ENCODE measurements at regions of chr6 and their contacts with region 1.

Region 1: GRCh38 chr6:24933868-24934401 is 1.8 kb downstream of the RIPOR2 start:
- DNase-seq: peak; percentile 48
- ATAC-seq: peak; percentile 15
- H3K4me3 Mint-ChIP-seq: peak overlapping the region; percentile 99
- H3K27ac Mint-ChIP-seq: peak overlapping the region; percentile 94
- H3K4me1 Mint-ChIP-seq: peaks cover 75% of the 10 kb centered on the region
- H3K27me3 Mint-ChIP-seq: no peaks in the 10 kb centered on the region

Region 2: GRCh38 chr6:24831771-24832716 is 101.9 kb before region 1 on chr6:
- POLR2A ChIA-PET with region 1: no interaction called
- DNase-seq: no peak
- ATAC-seq: no peak
- H3K4me3 Mint-ChIP-seq: no peak overlapping the region
- H3K27ac Mint-ChIP-seq: no peak overlapping the region
- H3K4me1 Mint-ChIP-seq: peaks cover 14% of the 10 kb centered on the region
- H3K27me3 Mint-ChIP-seq: no peaks in the 10 kb centered on the region

Region 3: DNA sequence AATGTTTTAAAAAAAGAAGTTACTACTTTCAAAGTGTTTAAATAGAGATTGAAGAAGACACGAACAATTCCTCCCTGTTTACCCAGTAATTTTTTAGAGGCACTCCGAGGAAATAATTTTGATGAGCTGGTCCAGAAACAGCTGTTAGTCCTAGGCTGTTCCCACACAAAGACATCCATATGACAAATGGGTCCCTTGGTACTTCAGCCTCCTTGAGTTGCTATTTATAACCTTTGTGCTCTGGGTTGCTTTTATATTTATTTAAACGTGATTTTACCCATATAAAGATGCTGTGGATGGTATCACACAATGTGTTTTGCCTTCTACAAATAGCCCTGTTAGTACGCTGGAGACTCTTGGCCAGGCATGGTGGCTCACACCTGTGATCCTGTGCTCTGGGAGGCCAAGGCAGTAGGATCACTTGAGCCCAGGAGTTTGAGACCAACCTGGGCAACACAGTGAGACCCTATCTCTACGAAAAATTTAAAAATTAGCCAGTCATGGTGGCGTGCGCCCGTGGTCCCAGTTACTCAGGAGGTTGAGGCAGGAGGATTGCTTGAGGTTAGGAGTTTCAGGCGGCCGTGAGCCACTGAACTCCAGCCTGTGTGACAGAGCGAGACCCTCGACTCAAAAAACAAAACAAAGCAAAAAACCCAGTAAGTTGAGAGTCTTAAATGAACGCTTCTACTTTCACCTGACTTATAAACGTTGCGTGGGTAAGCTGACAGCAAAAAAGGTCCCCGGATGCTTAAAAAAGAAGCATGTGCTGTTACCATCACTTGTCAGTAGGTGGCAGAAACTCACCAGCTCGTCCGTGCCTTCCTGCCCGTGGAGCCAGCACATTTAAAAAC is 78.3 kb before region 1 on chr6:
- POLR2A ChIA-PET with region 1: interaction called, 16 read pairs
- DNase-seq: no peak
- ATAC-seq: peak; percentile 25
- H3K4me3 Mint-ChIP-seq: peak overlapping the region; percentile 37
- H3K27ac Mint-ChIP-seq: peak overlapping the region; percentile 84
- H3K4me1 Mint-ChIP-seq: peaks cover 48% of the 10 kb centered on the region
- H3K27me3 Mint-ChIP-seq: no peaks in the 10 kb centered on the region

Region 4: DNA sequence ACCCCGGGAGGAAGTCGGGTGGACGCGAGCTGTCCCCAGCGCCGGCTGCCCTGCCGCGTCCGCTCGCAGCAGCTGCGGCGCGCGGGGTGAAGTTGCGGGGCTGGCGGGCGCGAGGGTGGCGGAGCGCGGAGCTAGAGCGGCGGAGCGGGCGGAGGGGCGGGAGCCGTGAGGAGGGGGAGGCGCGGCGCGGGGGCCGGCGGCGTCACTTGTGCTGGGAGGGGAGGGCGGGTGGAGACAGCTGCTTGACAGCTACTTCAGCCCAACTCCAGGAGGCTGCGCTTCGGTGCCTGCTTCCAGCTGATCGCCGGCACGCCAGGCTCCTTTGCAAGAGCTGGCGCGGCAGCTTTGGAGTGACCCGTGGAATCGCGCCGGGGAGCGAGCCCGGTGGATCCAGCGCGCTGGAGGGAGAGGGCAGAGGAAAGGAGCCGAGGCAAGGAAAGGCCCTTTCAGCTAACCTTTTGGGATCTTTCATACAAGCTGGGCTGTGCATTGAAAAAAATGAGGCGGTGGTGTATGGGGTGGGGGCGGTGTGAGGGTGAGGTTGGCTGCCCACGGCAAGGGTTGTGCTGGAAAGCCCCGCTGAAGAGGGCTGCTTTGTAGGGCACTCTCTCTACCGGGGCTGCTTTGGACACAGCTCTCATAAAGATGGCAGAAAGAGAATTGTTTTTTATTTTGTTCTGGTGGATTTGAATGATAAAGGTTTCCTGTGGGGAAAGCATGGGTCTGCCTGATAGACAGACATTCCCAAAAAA is 22.8 kb before region 1 on chr6:
- POLR2A ChIA-PET with region 1: interaction called, 25 read pairs
- DNase-seq: peak; percentile 70
- ATAC-seq: peak; percentile 31
- H3K4me3 Mint-ChIP-seq: peak overlapping the region; percentile 90
- H3K27ac Mint-ChIP-seq: peak overlapping the region; percentile 89
- H3K4me1 Mint-ChIP-seq: peaks cover 77% of the 10 kb centered on the region
- H3K27me3 Mint-ChIP-seq: no peaks in the 10 kb centered on the region

Region 5: DNA sequence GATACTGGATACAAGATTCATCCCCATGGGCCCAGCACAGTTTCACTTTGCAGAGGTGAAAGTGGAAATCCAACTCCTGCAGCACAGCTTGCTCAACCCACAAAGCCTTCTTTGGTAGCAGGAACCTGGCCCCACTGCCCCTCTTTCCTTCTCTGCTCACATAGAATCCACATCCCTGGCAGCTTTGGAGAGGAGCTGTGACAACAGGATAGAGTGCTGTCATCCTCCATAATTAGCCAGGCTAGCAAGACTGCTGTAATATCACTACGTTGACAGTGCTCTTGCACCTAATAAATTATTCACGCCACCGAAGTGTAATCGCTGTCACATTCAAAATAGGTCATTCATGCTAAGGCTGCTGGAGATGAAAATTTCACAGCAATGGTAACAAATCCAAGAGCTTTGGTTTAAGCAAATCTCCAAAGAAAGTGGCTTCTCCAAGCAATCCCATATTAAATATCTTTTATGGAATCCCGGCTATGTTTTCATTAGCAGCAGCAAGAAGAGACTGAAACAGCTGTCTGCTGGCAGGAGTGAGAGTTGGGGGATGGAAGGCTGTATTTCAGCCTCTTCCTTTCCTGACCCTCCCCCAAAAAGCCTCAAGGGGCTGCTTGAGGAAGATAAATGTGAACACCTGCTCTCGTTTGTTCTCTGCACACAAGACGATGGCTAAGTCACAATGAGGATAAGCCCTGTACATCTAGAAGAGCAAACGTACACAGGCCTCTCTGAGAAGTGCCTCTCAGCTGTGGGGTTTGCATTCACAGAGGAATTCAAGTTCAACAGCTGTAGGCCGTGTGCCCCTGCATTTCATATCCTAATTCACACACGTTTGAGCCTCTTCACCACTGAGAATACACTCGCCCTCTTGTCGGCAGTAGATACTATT is 14.7 kb before region 1 on chr6:
- POLR2A ChIA-PET with region 1: interaction called, 23 read pairs
- DNase-seq: no peak
- ATAC-seq: peak; percentile 37
- H3K4me3 Mint-ChIP-seq: peak overlapping the region; percentile 75
- H3K27ac Mint-ChIP-seq: peak overlapping the region; percentile 54
- H3K4me1 Mint-ChIP-seq: peaks cover 70% of the 10 kb centered on the region
- H3K27me3 Mint-ChIP-seq: no peaks in the 10 kb centered on the region

Region 6: DNA sequence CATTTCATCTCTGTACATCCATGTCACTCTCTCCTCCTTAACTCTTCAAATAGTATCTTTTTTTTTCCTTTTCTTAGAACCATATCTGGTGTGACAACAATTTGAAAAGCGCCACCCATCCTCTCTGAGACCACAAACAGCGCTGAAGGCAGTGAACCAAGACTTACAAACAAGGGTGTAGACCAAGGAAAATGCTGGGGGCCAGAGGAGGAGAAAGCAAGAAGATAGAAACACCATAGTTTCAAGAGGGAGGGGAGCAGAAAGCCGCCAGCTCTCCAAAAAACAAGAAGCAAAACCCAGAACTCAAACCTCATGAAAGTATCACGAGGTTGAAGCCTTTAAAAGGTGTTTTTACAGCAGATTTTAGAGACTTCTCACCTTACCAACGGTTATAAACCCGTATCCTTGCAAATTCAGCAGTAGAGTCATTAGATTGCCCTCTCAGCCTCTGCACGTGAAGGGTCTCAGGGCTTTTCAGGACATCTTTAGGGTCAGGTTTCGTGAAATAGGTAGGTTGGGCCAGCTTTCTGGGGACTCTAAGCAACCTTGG is 15.2 kb after region 1 on chr6:
- POLR2A ChIA-PET with region 1: interaction called, 184 read pairs
- DNase-seq: no peak
- ATAC-seq: peak; percentile 78
- H3K4me3 Mint-ChIP-seq: peak overlapping the region; percentile 72
- H3K27ac Mint-ChIP-seq: peak overlapping the region; percentile 98
- H3K4me1 Mint-ChIP-seq: peaks cover 63% of the 10 kb centered on the region
- H3K27me3 Mint-ChIP-seq: no peaks in the 10 kb centered on the region

Region 7: GRCh38 chr6:24991810-24992467 is 58.0 kb after region 1 on chr6:
- POLR2A ChIA-PET with region 1: interaction called, 55 read pairs
- DNase-seq: peak; percentile 57
- ATAC-seq: peak; percentile 93
- H3K4me3 Mint-ChIP-seq: peak overlapping the region; percentile 47
- H3K27ac Mint-ChIP-seq: peak overlapping the region; percentile 78
- H3K4me1 Mint-ChIP-seq: peaks cover 34% of the 10 kb centered on the region
- H3K27me3 Mint-ChIP-seq: no peaks in the 10 kb centered on the region

Region 8: DNA sequence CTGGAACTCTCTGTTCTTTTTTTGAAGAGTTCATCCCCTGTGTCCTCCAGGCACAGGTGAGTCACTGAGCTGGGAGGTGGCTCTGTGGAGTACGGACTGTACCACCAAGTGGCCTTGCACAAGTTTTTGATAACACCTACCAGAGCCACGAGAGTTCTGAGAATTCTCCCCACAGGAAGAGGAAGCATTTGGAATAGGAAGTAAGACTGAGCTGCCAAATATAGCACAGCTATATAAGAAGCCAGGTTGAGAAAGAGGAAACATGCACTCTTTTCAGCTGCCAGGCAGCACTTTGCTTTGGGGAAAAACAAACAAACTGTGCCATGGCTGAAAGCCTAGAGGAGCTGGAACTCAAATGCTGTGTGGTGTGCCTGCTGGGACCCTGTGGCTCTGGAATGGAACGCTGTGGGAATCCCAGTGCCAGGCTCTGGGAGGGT is 72.6 kb after region 1 on chr6:
- POLR2A ChIA-PET with region 1: interaction called, 39 read pairs
- DNase-seq: peak; percentile 51
- ATAC-seq: peak; percentile 88
- H3K4me3 Mint-ChIP-seq: peak overlapping the region; percentile 85
- H3K27ac Mint-ChIP-seq: peak overlapping the region; percentile 100
- H3K4me1 Mint-ChIP-seq: peaks cover 58% of the 10 kb centered on the region
- H3K27me3 Mint-ChIP-seq: no peaks in the 10 kb centered on the region

Measured in activated naive CD8-positive, alpha-beta T cell treated with anti-CD3 and anti-CD28 coated beads, Interleukin-2, amount 10 ng/mL, durations not matched to agents 7 days and 5 days (primary cell).